Psoas muscle (tissue), 8 donors: ENCODE measurements at regions of chr4 and their contacts with region 1.

Region 1: DNA sequence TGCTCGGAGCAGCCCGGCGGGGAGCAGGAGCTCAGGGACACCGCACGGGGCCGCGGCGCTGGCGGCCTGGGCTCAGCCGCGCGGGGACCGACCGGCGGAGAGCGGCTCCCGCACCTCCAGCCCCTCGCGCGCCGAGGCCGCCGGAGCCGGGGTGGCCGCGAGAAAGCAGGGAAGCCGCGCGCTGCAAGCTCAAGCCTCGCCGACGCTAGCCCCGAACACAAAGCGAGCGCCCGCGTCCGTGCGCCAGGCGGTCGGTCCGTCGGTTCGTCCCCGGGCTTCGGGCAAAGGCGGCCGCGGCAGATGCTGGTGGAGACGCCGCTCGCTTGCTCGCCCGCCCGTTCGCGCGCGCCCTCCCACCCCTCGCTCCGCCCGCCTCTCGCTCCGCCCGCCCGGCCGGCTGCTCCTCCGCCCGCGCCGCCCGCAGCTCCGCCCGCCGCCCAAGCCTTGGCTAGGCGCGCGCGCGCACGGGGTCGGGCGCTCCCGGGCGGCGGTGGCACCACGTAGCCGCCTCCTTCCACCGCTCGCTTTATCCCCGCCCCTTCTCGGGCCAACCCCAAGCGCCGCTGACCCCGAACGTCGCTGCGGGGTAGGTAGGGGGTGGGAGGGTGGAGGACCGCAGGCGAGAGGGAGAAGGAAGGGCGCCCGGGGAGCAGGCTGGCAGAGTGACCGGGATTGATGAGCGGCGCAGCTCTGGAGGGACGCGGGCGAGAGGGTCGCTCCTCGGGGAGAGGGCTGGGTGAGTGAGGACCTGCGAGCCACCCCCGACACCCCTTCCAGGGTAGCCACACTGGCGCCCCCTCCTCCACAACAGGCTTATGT is at the start of gene TSPAN5:
- DNase-seq: peak; percentile 76 to 82
- ATAC-seq: peak; percentile 80 to 93 (median 90)
- H3K4me3 ChIP-seq: peak within 1 kb of the TSS; percentile 73
- H3K27ac ChIP-seq: peak within 1 kb of the TSS; percentile 72
- H3K4me1 ChIP-seq: peaks cover 18% of the 10 kb centered on the region
- H3K27me3 ChIP-seq: peaks cover 0 to 21% (median 3%) of the 10 kb centered on the region in 3 donors
- CTCF ChIP-seq: no peak
- total RNA-seq, gene TSPAN5: 0.63 to 5.0 (median 4.1) TPM

Region 2: GRCh38 chr4:99324979-99325378 is 666.5 kb after region 1 on chr4:
- intact Hi-C with region 1: loop called in 1 of 2 experiments (anchors 10 kb)
- DNase-seq: peak; percentile 61 to 80
- ATAC-seq: peak; percentile 60 to 90 (median 74)
- H3K4me3 ChIP-seq: no peak overlapping the region
- H3K27ac ChIP-seq: peak overlapping the region; percentile 71
- H3K4me1 ChIP-seq: peaks cover 28% of the 10 kb centered on the region
- H3K27me3 ChIP-seq: no peaks in the 10 kb centered on the region
- CTCF ChIP-seq: no peak